IMR-90 (cell line): ENCODE measurements at regions of chr1 and their contacts with region 1.

Region 1: GRCh38 chr1:216045400-216045799 is 377.8 kb downstream of the USH2A start:
- DNase-seq: peak; percentile 98
- ATAC-seq: peak; percentile 94
- H3K4me3 ChIP-seq: no peak overlapping the region
- H3K27ac ChIP-seq: peak overlapping the region; percentile 54; the same call in 1 of the 2 replicates
- H3K4me1 ChIP-seq: peaks cover 6% of the 10 kb centered on the region
- H3K27me3 ChIP-seq: no peaks in the 10 kb centered on the region
- CTCF ChIP-seq: no peak
- POLR2A ChIP-seq: no peak
- RAD21 ChIP-seq: no peak

Region 2: DNA sequence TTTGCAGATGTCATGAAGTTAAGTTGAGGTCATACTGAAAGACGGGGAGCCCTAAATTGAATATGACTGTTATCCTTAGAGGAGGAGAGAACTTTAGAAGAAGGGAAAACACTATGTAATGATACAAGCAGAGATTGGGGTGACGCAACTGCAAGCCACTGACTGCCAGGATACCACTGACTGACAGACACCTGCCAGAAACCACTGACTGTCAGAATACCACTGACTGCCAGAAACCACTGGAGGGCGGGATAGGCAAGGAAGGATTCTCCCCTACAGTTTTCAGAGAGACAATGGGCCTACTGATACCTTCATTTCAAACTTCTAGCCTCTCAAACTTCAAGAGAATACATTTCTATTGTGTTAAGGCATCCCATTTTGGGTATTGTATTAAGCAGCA is 10.9 kb before region 1 on chr1:
- CTCF ChIA-PET with region 1: interaction called, 3 read pairs
- POLR2A ChIA-PET with region 1: no interaction called
- dilution Hi-C with region 1: no loop called
- in situ Hi-C with region 1: no loop called
- intact Hi-C with region 1: loop called (anchors 1 kb)
- DNase-seq: peak; percentile 6
- ATAC-seq: no peak
- H3K4me3 ChIP-seq: no peak overlapping the region
- H3K27ac ChIP-seq: no peak overlapping the region
- H3K4me1 ChIP-seq: peaks cover 7% of the 10 kb centered on the region; the same call in 1 of the 2 replicates
- H3K27me3 ChIP-seq: no peaks in the 10 kb centered on the region
- CTCF ChIP-seq: 0 out of 2 replicates have a peak, but pooled peaks have one; percentile 21
- POLR2A ChIP-seq: no peak
- RAD21 ChIP-seq: peak; percentile 40; the same call in 1 of the 2 replicates